ENCODE measurements at regions of chr14 and their contacts with region 1.

Region 1: GRCh38 chr14:64671591-64671990 is 32.6 kb upstream of the PLEKHG3 start:
- DNase-seq: peak in 1 of 2 experiments; percentile 65
- H3K4me3 ChIP-seq: no peak overlapping the region
- H3K27ac ChIP-seq: no peak overlapping the region
- H3K4me1 ChIP-seq: peaks cover 32% of the 10 kb centered on the region
- H3K27me3 ChIP-seq: no peaks in the 10 kb centered on the region
- CTCF ChIP-seq: peak; percentile 92

Region 2: GRCh38 chr14:64704143-64704742 is 32.7 kb after region 1 on chr14 and contains the start of gene PLEKHG3:
- CTCF ChIA-PET with region 1: no interaction called
- POLR2A ChIA-PET with region 1: no interaction called
- intact Hi-C with region 1: loop called (anchors 2 kb)
- DNase-seq: peak; percentile 70 to 88
- H3K4me3 ChIP-seq: peak within 1 kb of the TSS; percentile 97
- H3K27ac ChIP-seq: peak within 1 kb of the TSS; percentile 49
- H3K4me1 ChIP-seq: peaks cover 69% of the 10 kb centered on the region
- H3K27me3 ChIP-seq: no peaks in the 10 kb centered on the region
- CTCF ChIP-seq: no peak
- total RNA-seq, gene PLEKHG3: 59.3 and 61.7 TPM in 2 replicates

Region 3: DNA sequence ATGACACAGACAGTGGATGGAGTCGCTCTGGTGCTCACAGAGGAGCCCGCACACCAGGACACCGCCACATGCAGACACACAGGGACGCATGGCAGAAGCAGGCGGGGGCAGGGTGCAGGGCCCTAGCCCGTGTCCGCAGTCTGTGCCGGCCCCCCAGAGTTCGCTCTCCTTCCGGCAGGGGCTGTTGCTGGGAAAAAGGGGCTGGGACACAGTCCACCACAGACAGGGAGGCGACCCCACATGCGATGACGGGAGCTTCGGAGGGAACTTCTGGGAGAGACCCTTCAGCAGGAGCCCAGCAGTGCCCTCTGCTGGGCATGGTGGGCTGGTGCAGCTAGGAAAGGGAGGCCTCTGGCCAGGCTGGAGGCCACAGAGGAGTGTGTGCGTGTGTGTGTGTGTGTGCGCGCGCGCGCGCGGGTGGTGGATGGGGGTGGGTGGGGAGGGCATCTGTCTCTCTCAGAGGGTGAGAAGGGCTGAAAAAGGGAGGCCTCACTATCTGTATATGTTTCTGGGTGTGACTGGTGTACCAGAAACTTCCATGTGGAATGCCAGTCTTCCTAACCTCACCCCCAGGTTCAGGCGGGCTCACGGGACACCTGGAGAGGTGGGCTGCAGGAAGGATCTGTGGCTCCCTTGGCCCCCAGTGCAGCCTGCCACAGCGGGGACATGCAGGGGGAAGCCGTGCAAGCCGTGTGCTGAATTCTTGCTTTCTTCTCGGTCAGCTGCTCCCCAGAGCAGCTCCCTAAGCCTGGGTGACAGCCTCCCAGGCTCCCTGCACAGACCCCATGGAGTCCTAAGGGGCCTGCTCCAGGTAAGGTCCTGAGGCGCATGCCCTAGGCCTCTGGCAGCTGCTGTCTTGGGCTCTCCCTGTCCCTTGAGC is 93.3 kb after region 1 on chr14:
- CTCF ChIA-PET with region 1: interaction called, 11 read pairs
- POLR2A ChIA-PET with region 1: no interaction called
- intact Hi-C with region 1: loop called (anchors 1 kb)
- DNase-seq: peak in 1 of 2 experiments; percentile 72
- H3K4me3 ChIP-seq: peak overlapping the region; percentile 27; the same call in 1 of the 2 replicates
- H3K27ac ChIP-seq: no peak overlapping the region
- H3K4me1 ChIP-seq: peaks cover 39% of the 10 kb centered on the region
- H3K27me3 ChIP-seq: no peaks in the 10 kb centered on the region
- CTCF ChIP-seq: peak; percentile 92

Region 4: GRCh38 chr14:64891839-64892375 is 220.3 kb after region 1 on chr14:
- CTCF ChIA-PET with region 1: interaction called, 5 read pairs
- POLR2A ChIA-PET with region 1: no interaction called
- intact Hi-C with region 1: loop called (anchors 5 kb)
- DNase-seq: peak; percentile 23 to 63
- H3K4me3 ChIP-seq: no peak overlapping the region
- H3K27ac ChIP-seq: no peak overlapping the region
- H3K4me1 ChIP-seq: no peaks in the 10 kb centered on the region
- H3K27me3 ChIP-seq: no peaks in the 10 kb centered on the region
- CTCF ChIP-seq: peak; percentile 89

Region 5: GRCh38 chr14:64986578-64987571 is 315.3 kb after region 1 on chr14 and contains the start of gene FNTB:
- CTCF ChIA-PET with region 1: no interaction called
- POLR2A ChIA-PET with region 1: no interaction called
- intact Hi-C with region 1: loop called (anchors 1 kb)
- DNase-seq: peak; percentile 93 to 96
- H3K4me3 ChIP-seq: peak within 1 kb of the TSS; percentile 86
- H3K27ac ChIP-seq: peak within 1 kb of the TSS; percentile 77
- H3K4me1 ChIP-seq: peaks cover 21% of the 10 kb centered on the region
- H3K27me3 ChIP-seq: no peaks in the 10 kb centered on the region
- CTCF ChIP-seq: peak; percentile 61; the same call in 1 of the 2 replicates
- total RNA-seq, gene FNTB: 23.5 and 35.3 TPM in 2 replicates

Measured in PC-9 (cell line).